PC-9 (cell line): ENCODE measurements at regions of chr6 and their contacts with region 1.

Region 1: GRCh38 chr6:10809098-10809497 is 29.2 kb downstream of the MAK start:
- DNase-seq: no peak
- H3K4me3 ChIP-seq: no peak overlapping the region
- H3K27ac ChIP-seq: no peak overlapping the region
- H3K4me1 ChIP-seq: no peaks in the 10 kb centered on the region
- H3K27me3 ChIP-seq: no peaks in the 10 kb centered on the region
- CTCF ChIP-seq: no peak

Region 2: GRCh38 chr6:10854922-10855632 is 46.0 kb after region 1 on chr6:
- CTCF ChIA-PET with region 1: no interaction called
- POLR2A ChIA-PET with region 1: interaction called, 15 read pairs
- intact Hi-C with region 1: no loop called
- DNase-seq: no peak
- H3K4me3 ChIP-seq: no peak overlapping the region
- H3K27ac ChIP-seq: no peak overlapping the region
- H3K4me1 ChIP-seq: no peaks in the 10 kb centered on the region
- H3K27me3 ChIP-seq: no peaks in the 10 kb centered on the region
- CTCF ChIP-seq: no peak

Region 3: DNA sequence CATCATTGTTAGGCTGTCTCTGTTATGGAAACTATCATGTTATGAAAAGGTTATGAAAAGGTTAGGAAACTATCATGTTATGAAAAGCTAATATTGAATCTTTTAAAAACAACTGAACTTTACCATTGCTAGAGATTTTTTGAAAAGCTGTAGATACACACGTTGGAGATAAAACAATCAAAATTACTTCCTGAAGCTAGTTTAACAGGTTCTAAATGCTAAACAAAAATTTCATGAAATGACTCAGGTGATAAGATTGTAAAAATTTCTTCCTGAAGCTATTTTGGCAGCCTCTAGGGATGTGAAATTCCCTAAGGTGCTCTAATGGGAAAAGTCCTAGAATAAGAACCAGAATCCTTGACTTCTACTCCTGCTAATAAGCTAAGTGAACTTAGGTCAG is 64.2 kb after region 1 on chr6:
- CTCF ChIA-PET with region 1: no interaction called
- POLR2A ChIA-PET with region 1: no interaction called
- intact Hi-C with region 1: no loop called
- DNase-seq: peak in 1 of 2 experiments; percentile 88
- H3K4me3 ChIP-seq: peak overlapping the region; percentile 42; the same call in 1 of the 2 replicates
- H3K27ac ChIP-seq: peak overlapping the region; percentile 88
- H3K4me1 ChIP-seq: peaks cover 34% of the 10 kb centered on the region
- H3K27me3 ChIP-seq: no peaks in the 10 kb centered on the region
- CTCF ChIP-seq: no peak

Region 4: DNA sequence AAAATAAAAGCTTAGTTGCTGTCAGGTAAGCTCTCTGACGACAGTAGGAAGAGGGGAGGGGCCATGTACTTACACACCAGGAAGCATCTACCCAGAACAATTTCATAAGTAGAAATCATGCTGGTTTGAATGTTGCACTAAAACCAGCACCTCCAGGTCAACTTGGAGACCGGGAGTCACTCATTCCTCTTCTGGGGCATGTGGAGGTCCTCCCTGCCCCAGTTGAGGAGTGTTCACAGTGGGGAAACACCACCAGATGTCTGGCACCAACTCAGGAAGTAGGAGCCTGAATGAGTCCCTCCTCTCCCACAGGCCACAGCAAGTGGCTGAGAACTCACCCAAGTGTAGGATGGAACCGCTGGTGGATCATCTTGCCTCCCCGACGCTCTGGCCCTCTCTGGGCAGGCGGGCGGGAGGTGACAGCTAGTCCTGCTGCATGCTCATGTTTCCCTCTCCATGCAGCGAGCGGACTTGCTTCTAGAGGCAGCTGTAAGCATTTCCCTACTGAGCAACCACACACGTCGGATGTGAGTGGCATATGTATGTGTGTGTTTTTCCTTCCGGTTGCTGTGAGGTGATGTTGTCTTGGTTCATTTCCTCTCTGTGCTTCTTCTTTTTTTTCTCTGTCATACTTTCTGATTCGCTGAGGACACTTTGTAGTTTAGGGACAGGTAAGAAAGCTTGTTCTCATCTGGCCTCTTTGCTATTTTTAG is 572.9 kb after region 1 on chr6:
- CTCF ChIA-PET with region 1: no interaction called
- POLR2A ChIA-PET with region 1: no interaction called
- intact Hi-C with region 1: no loop called
- DNase-seq: no peak
- H3K4me3 ChIP-seq: no peak overlapping the region
- H3K27ac ChIP-seq: no peak overlapping the region
- H3K4me1 ChIP-seq: no peaks in the 10 kb centered on the region
- H3K27me3 ChIP-seq: no peaks in the 10 kb centered on the region
- CTCF ChIP-seq: no peak